Activated CD4-positive, alpha-beta T cell treated with anti-CD3 and anti-CD28 coated beads, Interleukin-2, amount 10 ng/mL, durations not matched to agents 24 days and 14 days (primary cell): ENCODE measurements at regions of chr11 and their contacts with region 1.

Region 1: DNA sequence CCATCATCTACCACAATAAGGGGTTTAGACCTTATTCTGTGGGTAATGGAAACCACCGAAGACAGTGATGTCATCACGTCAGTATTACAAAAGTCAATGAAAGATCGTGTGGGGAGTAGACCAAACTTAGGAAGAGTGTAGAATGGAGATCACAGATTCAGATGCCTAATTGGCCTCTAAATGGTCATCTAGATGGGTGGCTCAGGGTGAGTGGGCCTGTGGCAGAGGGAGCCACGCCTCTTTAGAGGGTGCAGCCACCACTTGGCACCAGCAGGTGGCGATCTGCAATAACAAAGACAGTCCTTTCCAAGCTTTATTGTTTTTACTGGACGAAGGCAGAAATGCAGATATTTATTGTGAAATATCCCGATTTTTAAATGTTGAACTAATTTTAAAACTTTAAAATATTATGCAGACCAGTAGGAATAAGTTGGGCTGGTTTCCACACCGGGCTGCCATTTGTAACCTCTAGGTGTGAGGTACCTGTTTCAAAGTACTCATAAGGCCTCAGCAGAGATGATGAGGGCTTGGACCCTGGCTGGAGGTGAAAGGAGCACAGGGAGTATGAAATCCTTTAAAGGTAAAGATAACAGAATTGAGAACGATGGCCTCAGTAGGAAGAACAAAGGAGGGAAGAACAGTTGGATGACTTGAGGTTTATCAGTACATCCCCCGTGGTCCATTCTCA is 222.0 kb downstream of the DBX1 start:
- DNase-seq: peak; percentile 74
- H3K4me3 Mint-ChIP-seq: no peak overlapping the region
- H3K27ac Mint-ChIP-seq: no peak overlapping the region
- H3K4me1 Mint-ChIP-seq: no peaks in the 10 kb centered on the region
- H3K27me3 Mint-ChIP-seq: peaks cover 3% of the 10 kb centered on the region

Region 2: DNA sequence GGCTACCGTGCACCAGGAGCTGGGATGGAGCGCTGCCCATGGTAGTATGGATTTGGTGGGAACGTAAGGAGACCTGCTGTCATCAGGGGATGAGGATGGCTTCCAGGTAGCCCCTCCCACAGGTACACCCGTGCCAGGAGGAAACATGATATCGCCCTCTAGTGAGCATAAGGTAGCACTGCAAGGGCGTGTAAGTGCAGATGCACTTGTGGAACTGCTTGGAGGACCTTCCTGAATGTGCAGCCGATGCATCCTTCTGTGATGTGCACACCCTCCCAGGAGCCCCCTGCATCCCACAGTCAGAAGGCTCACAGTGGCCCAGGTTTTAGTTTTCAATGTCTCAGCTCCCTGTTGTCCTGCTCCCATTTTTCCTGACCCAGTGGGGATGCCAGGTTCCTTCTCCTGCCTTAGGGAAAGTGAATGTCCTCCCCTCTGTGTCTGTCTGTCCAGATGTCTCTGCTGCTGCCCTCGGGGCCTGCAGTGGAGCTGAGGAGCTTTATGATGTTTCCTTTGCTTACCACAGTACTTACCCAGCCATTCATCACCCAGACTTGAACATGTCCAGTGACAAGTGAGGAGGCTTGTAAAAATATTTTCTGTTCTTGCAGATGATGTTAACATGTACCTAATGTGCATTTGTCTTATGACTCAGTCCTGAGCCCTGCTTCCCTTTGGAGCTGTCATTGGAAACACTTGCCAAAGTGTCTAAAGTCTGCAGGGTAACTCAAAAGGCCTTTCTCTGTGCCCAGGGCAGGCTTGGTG is 172.8 kb after region 1 on chr11:
- intact Hi-C with region 1: loop called (anchors 5 kb)
- DNase-seq: peak; percentile 82
- H3K4me3 Mint-ChIP-seq: no peak overlapping the region
- H3K27ac Mint-ChIP-seq: no peak overlapping the region
- H3K4me1 Mint-ChIP-seq: peaks cover 1% of the 10 kb centered on the region
- H3K27me3 Mint-ChIP-seq: no peaks in the 10 kb centered on the region